Lower leg skin (tissue), 4 donors: ENCODE measurements at regions of chr2 and their contacts with region 1.

Region 1: DNA sequence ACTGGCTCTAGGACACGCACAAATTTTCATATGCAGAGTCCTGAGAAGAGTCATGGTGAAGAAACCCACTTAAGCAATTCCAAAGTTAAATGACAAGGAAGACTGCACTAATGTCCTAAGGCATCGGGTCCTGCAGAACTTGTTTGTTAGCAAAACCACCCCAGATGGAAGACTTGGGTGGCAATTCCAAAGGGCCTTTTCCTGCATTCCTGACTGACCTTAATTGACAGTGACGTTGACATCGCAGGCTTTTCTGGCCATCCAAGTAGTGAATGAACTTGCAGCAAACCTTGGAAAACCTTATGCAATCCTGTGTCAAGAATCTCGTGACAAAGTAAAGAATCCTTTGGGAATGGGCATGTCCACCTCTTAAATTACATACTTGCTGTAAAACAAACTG is 112.5 kb upstream of the SH3BP4 start:
- DNase-seq: peak in 1 of 2 donors; percentile 26
- H3K4me3 ChIP-seq: no peak overlapping the region
- CTCF ChIP-seq: no peak
- POLR2A ChIP-seq: no peak

Region 2: GRCh38 chr2:236526455-236527158 is 1687.3 kb after region 1 on chr2:
- intact Hi-C with region 1: loop called (anchors 5 kb)
- DNase-seq: no peak
- H3K4me3 ChIP-seq: no peak overlapping the region
- CTCF ChIP-seq: no peak
- POLR2A ChIP-seq: no peak